Caco-2 (cell line): ENCODE measurements at regions of chr9 and their contacts with region 1.

Region 1: DNA sequence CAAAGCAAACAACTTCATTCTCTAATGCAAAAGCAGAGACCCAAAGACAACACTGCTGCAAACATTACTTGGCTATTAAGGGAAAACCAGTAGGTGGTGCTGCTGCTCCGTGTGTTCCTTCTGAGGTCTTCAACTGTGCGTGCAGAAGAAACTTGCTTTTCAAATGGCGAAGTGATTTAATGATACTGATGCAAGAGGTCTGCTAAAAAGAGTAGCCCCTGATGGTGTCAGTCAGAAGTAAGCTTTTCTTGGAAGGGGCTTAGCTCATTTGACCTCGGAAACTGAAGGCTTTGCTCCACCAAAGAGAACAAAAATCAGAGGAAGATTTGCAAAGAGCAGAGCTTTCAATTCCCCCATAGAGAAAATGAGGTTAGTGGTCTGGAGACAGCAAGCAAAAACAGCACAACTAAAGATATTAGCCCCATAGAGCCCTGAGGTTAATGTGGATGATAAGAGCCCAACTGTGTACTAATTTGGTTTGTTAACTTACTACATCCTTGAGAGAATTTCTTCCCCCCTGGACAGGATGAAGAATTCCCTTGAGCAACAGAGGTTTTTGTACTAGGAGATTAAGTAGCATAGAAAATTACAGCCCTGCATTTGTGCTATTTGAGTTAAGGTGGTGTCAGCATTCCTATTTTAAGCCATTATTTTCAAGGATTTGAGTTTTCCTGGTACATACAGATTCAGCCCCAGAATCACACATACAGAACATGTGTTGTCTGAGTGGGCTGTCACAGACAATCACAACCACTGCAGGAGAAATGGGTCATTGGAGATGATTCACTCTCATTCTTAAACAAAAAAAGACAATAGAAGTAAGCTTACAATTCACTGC is 153.2 kb upstream of the C9orf72 start:
- DNase-seq: peak; percentile 32 to 34
- H3K4me3 ChIP-seq: no peak overlapping the region
- H3K4me3 Mint-ChIP-seq: no peak overlapping the region
- H3K27ac Mint-ChIP-seq: no peak overlapping the region
- H3K4me1 ChIP-seq: no peaks in the 10 kb centered on the region
- H3K4me1 Mint-ChIP-seq: no peaks in the 10 kb centered on the region
- H3K27me3 ChIP-seq: no peaks in the 10 kb centered on the region
- H3K27me3 Mint-ChIP-seq: peaks cover 5% of the 10 kb centered on the region
- CTCF ChIP-seq: peak in 1 of 2 experiments; percentile 32

Region 2: GRCh38 chr9:27645161-27645840 is 81.2 kb before region 1 on chr9:
- CTCF ChIA-PET with region 1: no interaction called
- POLR2A ChIA-PET with region 1: no interaction called
- intact Hi-C with region 1: no loop called
- DNase-seq: no peak
- H3K4me3 ChIP-seq: no peak overlapping the region
- H3K4me3 Mint-ChIP-seq: no peak overlapping the region
- H3K27ac Mint-ChIP-seq: no peak overlapping the region
- H3K4me1 ChIP-seq: no peaks in the 10 kb centered on the region
- H3K4me1 Mint-ChIP-seq: no peaks in the 10 kb centered on the region
- H3K27me3 ChIP-seq: no peaks in the 10 kb centered on the region
- H3K27me3 Mint-ChIP-seq: no peaks in the 10 kb centered on the region
- CTCF ChIP-seq: no peak

Region 3: DNA sequence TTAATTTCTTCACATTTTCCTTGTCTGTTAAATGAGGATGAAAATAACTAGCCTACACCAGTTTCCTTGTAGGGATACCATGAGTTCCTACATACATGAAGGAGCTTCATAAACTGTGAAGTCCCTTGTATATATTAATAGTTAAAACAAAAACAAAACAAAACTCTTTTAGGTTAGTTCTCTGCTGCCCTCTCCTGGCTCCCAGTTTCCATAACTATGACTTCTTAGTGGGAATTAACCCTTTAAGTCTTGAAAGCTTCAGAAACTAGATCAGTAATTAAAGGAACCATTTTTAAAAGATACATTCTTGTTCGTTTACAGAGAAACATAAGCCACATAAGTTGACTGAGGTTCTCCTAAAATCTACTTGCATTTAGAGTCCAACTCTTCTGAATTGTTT is 346.8 kb after region 1 on chr9:
- CTCF ChIA-PET with region 1: no interaction called
- POLR2A ChIA-PET with region 1: no interaction called
- intact Hi-C with region 1: loop called (anchors 1 kb)
- DNase-seq: peak in 1 of 2 experiments; percentile 10
- H3K4me3 ChIP-seq: no peak overlapping the region
- H3K4me3 Mint-ChIP-seq: no peak overlapping the region
- H3K27ac Mint-ChIP-seq: no peak overlapping the region
- H3K4me1 ChIP-seq: no peaks in the 10 kb centered on the region
- H3K4me1 Mint-ChIP-seq: no peaks in the 10 kb centered on the region
- H3K27me3 ChIP-seq: no peaks in the 10 kb centered on the region
- H3K27me3 Mint-ChIP-seq: no peaks in the 10 kb centered on the region
- CTCF ChIP-seq: peak in 1 of 2 experiments; percentile 17

Region 4: DNA sequence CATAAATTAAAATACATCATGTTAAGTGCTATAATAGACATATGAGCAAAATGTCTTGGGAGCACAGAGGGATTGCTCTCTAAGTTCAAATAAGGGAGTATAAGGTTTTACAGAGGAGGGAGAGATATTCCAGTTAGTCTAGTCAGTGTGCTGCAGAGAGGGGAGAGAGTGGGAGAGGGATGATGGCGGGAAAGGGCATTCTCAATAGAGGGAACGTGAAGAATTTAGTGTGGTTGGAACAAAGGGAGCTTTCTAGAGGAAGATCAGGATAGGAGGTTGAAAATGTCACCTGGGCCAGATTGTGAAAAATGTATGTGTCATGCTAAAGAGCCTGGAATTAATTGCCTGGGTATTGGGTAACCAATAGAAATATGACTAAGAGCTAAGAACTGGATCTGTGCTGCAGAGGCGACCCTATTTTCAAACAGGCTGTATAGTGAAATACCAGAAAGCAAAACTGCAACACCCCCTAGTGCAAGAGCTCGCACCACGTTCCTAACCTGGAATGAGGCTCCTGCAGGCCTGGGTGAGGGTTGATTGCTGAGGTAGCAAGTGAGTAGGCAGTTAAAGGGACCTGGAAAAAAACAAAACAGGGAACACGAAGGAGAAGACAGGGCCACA is 638.7 kb after region 1 on chr9:
- CTCF ChIA-PET with region 1: no interaction called
- POLR2A ChIA-PET with region 1: no interaction called
- intact Hi-C with region 1: loop called (anchors 5 kb)
- DNase-seq: peak in 1 of 2 experiments; percentile 1
- H3K4me3 ChIP-seq: no peak overlapping the region
- H3K4me3 Mint-ChIP-seq: no peak overlapping the region
- H3K27ac Mint-ChIP-seq: no peak overlapping the region
- H3K4me1 ChIP-seq: no peaks in the 10 kb centered on the region
- H3K4me1 Mint-ChIP-seq: no peaks in the 10 kb centered on the region
- H3K27me3 ChIP-seq: no peaks in the 10 kb centered on the region
- H3K27me3 Mint-ChIP-seq: peaks cover 7% of the 10 kb centered on the region
- CTCF ChIP-seq: peak in 1 of 2 experiments; percentile 5